ENCODE measurements at regions of chr6 and their contacts with region 1.

Region 1: GRCh38 chr6:31197559-31198305 is 27.2 kb upstream of the POU5F1 start:
- DNase-seq: peak; percentile 95
- H3K4me3 ChIP-seq: peak overlapping the region; percentile 60 to 71 (median 66)
- H3K27ac ChIP-seq: peak overlapping the region; percentile 91 to 97 (median 94)
- H3K4me1 ChIP-seq: peaks cover 0 to 21% (median 11%) of the 10 kb centered on the region in 4 donors
- H3K27me3 ChIP-seq: no peaks in the 10 kb centered on the region
- CTCF ChIP-seq: no peak
- EP300 ChIP-seq: peak in 1 of 4 donors; percentile 18
- POLR2A ChIP-seq: peak; percentile 72 to 78

Region 2: DNA sequence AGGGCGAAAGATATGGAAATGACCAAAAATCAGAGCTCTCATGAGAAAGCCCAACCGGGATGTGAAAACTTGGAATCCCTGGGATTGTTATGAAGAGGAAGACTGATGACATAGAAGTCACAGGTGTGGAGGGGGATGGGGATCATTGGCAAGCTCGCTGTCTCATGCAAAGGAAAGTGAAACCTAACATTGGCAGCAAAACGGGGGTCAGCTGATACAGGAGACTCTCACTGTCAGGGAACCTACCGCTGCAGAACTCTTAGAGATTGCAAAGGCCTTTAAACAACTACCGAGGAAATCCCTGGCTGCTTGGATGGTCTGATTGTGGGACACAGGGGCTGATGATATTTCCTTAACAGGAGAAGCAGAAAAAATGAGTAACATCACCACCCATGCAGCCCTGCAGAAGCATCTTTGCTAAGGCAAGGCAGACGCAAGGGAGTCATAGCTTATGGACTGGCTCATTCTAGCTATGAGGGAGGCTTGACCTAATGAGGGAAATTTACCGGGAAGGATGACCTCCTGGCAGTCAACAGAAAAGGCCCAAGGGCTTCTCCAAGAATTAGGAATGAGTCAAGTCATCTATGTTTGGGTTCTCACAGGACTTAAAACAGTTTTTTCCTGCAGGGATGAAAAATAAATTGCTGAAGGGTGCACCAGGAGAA is 207.2 kb before region 1 on chr6:
- intact Hi-C with region 1: no loop called
- DNase-seq: no peak
- H3K4me3 ChIP-seq: no peak overlapping the region
- H3K27ac ChIP-seq: no peak overlapping the region
- H3K4me1 ChIP-seq: no peaks in the 10 kb centered on the region
- H3K27me3 ChIP-seq: no peaks in the 10 kb centered on the region
- CTCF ChIP-seq: no peak
- EP300 ChIP-seq: no peak
- POLR2A ChIP-seq: no peak

Region 3: DNA sequence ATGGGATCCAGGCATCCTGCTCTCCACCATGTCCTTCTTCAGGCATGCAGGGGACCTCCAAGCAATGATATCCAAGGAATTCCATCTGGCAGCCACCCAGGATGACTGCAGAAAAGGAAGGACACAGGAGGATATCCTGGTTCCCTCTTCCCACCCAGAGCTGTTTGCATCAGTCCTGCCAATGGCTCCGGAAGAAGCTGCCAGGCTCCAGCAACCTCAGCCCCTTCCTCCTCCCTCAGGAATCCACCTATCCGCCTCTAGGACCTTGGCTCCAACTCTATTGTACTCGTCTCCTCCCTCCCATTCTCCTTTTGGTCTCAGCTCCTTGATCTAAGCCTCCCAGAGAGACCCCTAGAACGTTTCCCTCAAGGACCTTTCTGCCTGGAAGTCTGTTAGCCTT is 58.1 kb before region 1 on chr6:
- intact Hi-C with region 1: loop called (anchors 1 kb)
- DNase-seq: no peak
- H3K4me3 ChIP-seq: no peak overlapping the region
- H3K27ac ChIP-seq: no peak overlapping the region
- H3K4me1 ChIP-seq: peaks cover 0 to 23% (median 12%) of the 10 kb centered on the region in 4 donors
- H3K27me3 ChIP-seq: no peaks in the 10 kb centered on the region
- CTCF ChIP-seq: no peak
- EP300 ChIP-seq: no peak
- POLR2A ChIP-seq: no peak

Region 4: DNA sequence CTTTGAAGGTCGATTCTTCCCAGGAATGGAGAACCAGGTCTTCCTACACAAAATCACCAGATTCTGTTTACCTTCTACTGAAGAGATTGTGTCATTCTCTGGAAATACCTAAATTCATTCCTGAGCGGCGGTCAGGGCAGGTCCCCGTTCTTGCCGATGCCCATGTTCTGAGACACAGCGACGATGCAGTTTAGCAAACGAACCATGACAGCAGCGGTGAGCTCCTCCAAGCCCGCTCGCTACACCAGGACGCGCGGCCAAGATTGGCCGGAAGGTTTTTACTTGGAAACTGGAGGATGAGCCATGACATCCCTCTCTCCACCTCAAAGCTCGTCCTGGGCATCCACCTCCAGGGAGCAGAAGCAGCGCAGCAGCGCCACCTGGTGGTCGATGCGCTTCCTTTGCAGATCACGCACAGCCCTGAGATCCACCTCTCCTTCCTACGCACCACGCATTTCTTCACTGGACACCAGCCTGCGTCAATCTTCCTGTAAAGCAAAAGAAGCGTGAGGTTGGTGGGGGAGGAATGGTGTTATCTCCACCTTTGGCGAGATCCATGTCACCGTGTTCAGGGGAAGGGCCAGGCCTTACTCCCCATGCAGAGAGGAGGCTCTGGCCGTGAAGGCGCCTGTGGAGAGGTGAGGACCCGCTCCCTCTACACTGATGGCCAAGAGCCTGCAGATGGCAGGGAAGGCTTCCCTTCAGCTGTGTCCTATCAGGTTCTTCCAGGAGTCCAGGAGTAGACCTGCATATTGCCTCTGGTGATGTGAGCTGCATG is 169.2 kb after region 1 on chr6:
- intact Hi-C with region 1: loop called (anchors 1 kb)
- DNase-seq: peak; percentile 94
- H3K4me3 ChIP-seq: peak overlapping the region in 3 of 4 donors; percentile 23 to 32 (median 32)
- H3K27ac ChIP-seq: no peak overlapping the region
- H3K4me1 ChIP-seq: peaks cover 0 to 4% (median 2%) of the 10 kb centered on the region in 4 donors
- H3K27me3 ChIP-seq: peaks cover 0 to 11% (median 0%) of the 10 kb centered on the region in 3 donors
- CTCF ChIP-seq: peak; percentile 90 to 96 (median 93)
- EP300 ChIP-seq: no peak
- POLR2A ChIP-seq: no peak